Activated naive CD4-positive, alpha-beta T cell treated with anti-CD3 and anti-CD28 coated beads for 36 hours (primary cell): ENCODE measurements at regions of chr12 and their contacts with region 1.

Region 1: DNA sequence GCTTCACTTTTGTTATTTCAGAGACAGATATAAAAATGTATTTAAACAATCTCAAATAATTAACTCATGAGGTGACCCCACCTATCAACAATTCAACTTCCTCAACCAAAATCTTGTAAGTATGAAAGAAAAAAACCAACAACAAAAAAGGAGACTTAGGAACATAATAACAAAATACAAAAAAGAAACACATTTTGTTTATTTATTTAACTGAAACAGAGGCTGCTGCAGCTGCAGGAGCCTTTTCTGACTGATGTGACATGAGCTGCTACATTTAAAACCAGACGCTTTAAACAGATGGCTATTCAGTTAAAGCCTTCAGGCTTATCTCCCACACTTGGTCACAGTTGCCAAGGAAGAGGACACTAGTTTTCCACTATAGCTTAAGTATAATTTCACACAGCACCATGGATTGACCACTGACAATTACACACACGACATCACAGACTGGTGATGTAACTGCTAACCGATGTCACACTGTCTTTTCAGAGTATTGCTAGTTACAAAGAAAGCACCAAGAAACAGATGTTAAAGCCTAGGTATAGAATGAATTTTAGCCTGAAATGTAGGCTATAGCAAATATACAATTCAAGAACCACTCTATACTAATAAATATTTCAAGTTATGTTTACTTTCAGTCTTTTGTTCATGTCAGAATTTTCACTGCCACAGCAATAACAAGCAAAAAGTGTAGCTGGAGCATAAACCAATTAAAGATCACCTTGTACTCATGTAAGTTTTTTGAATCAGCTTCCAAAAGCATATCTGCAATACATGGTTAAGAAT is 113.0 kb downstream of the MED13L start:
- DNase-seq: no peak
- H3K4me3 Mint-ChIP-seq: no peak overlapping the region
- H3K27ac Mint-ChIP-seq: peak overlapping the region; percentile 18
- H3K4me1 Mint-ChIP-seq: peaks cover 49% of the 10 kb centered on the region
- H3K27me3 Mint-ChIP-seq: no peaks in the 10 kb centered on the region

Region 2: DNA sequence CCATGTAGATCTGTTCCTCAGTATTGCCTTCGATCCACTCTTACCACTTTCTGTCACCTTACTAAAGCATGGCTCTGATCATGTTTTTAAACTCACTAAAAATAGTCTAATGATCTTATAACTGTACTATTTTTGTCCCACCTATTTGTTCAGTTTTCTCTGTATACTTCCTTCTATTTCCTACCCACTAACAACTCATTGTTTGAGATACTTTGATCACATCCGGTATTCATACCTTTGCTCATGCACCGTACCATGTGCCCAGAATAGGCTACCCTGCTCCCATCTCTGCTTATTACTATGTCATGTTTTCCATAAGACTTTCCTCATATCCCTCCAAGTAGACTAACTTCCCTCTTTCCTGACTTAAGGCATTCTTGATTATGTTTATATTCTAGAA is 15.6 kb before region 1 on chr12:
- CTCF ChIA-PET with region 1: interaction called, 3 read pairs
- intact Hi-C with region 1: loop called (anchors 1 kb)
- DNase-seq: no peak
- H3K4me3 Mint-ChIP-seq: no peak overlapping the region
- H3K27ac Mint-ChIP-seq: no peak overlapping the region
- H3K4me1 Mint-ChIP-seq: peaks cover 57% of the 10 kb centered on the region
- H3K27me3 Mint-ChIP-seq: no peaks in the 10 kb centered on the region